ENCODE measurements at regions of chr3 and their contacts with region 1.

Region 1: DNA sequence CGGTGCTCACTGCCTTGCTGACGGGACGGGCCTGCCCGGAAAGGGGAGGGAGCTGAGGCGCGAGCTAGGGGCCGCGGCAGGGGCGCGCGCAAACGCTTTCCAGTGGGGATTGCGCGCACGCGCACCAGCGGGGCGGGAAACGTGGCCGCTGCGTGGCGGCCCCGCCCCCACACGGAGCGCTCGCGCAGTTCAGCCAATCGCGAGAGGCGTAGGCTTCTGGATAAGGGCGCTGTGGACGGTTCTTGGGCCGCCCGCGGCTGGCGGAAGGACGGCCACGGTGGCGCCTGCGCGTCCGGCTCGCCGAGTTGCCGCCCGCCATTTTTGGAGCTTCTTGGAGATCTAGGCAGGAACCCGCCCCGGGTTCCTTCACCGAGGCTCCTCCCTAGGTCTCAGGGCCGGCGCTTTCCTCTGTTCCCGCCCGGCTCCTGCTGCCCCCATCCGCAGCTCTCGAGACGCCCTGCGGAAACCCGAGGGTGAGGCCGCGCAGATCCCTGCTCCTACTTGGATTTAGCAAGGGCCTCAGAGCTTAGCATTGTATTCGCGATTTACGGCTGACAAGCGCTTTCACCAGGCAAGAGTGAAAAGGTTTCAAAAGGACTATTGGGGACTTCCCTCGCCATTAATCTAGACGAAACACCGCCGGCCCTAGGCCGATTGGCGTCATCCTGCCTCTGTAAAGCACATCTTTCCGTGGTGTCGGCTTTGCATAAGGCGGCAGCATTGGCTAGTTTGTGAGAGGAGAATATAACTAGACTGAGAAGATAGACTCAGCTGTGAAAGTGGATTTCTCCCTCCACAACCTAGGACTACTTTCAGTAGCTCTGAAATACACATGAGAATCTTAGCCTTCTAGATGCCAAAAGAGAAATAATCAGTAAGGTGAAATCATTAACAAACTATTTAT is 496 bp upstream of the STAG1 start:
- DNase-seq: peak; percentile 99 to 100
- ATAC-seq: peak; percentile 98
- H3K4me3 ChIP-seq: peak overlapping the region; percentile 35 to 71
- H3K27ac ChIP-seq: peak overlapping the region; percentile 96 to 99
- H3K4me1 ChIP-seq: peaks cover 0 to 5% of the 10 kb centered on the region in 2 donors
- H3K27me3 ChIP-seq: no peaks in the 10 kb centered on the region

Region 2: DNA sequence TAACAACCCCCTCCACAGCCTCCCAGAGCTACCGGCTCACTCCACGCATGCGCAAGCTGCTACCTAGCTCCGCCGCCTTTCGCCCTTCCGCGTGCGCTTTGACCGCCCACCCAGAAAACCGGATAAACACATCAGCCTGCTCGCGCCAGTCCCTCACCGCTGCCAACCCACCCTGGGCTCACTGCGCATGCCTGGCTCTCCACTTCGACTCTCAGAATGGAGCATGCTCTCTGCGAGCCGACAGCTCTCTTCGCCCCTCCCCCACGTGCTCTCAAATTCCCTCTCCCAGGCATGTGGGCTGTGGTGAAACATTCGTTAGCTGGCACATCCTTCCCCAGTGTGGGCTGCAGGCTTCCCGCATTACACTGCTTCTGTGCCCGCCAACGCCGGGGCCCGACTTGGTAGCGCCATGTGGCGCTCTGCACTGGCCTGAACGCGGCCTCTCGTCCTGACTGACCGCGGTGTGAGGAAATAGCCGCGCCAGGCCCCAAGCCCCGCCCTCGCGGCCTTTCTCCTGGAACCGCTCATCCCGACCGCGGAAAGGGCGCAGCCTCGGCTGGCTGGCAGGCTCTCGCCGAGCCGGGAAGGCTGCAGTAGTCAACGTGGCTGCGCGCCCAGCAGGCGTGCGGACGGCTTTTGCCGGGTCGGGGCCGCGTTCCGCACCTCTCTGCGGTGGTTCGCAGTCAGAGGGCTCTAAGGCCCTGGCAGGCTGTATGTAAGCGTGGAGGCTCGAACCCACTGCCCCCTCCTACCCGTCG is 556.1 kb before region 1 on chr3:
- intact Hi-C with region 1: loop called in 1 of 2 experiments (anchors 5 kb)
- DNase-seq: peak; percentile 100
- ATAC-seq: peak; percentile 96
- H3K4me3 ChIP-seq: peak overlapping the region; percentile 55 to 88
- H3K27ac ChIP-seq: peak overlapping the region; percentile 83 to 94
- H3K4me1 ChIP-seq: peaks cover 2 to 7% of the 10 kb centered on the region in 2 donors
- H3K27me3 ChIP-seq: no peaks in the 10 kb centered on the region

Region 3: GRCh38 chr3:136305878-136306277 is 446.8 kb before region 1 on chr3:
- intact Hi-C with region 1: loop called in 1 of 2 experiments (anchors 5 kb)
- DNase-seq: no peak
- ATAC-seq: no peak
- H3K4me3 ChIP-seq: no peak overlapping the region
- H3K27ac ChIP-seq: no peak overlapping the region
- H3K4me1 ChIP-seq: no peaks in the 10 kb centered on the region
- H3K27me3 ChIP-seq: no peaks in the 10 kb centered on the region

Region 4: GRCh38 chr3:136545664-136546268 is 206.9 kb before region 1 on chr3:
- intact Hi-C with region 1: loop called (anchors 10 kb)
- DNase-seq: no peak
- ATAC-seq: no peak
- H3K4me3 ChIP-seq: no peak overlapping the region
- H3K27ac ChIP-seq: no peak overlapping the region
- H3K4me1 ChIP-seq: peaks cover 1 to 2% of the 10 kb centered on the region in 2 donors
- H3K27me3 ChIP-seq: no peaks in the 10 kb centered on the region

Region 5: DNA sequence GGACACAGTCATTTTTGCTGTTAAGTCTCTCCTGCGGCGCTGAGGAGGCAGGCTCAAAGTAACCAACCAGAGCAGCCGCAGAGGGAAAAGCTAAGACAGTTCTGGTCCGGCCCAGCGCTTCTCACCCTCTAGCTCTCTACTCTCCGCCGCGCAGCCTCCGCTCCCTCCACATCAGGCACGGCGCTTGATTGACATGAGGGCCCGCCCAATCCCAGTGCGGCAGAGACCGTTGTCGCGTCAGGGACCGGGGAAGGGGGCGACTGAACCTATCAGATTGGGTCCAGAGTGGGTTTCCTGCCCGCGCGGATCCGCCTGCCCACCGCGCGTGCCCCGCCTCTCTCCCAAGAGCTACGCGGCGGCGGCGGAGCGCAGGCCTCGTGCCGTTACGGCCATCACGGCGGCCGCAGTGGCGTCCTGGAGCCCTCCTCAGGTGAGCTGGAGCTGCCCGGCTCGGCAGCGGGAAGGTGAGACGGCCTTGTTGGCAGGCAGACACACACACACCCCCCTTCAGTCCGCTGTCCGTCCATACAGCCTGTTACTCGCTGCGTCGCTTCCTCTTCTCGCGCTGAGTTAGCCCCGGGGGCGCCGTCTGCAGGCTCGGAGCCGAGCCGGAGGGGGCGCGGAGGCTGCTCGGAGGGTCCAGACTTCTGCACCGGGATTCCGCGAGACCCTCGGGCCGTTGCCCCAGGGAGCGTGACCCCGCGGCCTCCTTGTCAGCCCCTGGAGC is 109.4 kb after region 1 on chr3 and contains the start of gene NCK1:
- intact Hi-C with region 1: loop called (anchors 5 to 10 kb)
- DNase-seq: peak; percentile 99 to 100
- ATAC-seq: peak; percentile 99
- H3K4me3 ChIP-seq: peak within 1 kb of the TSS; percentile 67 to 69
- H3K27ac ChIP-seq: peak within 1 kb of the TSS in 1 of 2 donors; percentile 37
- H3K4me1 ChIP-seq: no peaks in the 10 kb centered on the region
- H3K27me3 ChIP-seq: no peaks in the 10 kb centered on the region
- total RNA-seq, gene NCK1: 36.7 to 51.9 TPM

Region 6: GRCh38 chr3:137013955-137014688 is 261.4 kb after region 1 on chr3:
- intact Hi-C with region 1: loop called (anchors 2 to 5 kb)
- DNase-seq: peak; percentile 92 to 96
- ATAC-seq: peak; percentile 98
- H3K4me3 ChIP-seq: peak overlapping the region; percentile 60 to 76
- H3K27ac ChIP-seq: peak overlapping the region; percentile 49 to 92
- H3K4me1 ChIP-seq: no peaks in the 10 kb centered on the region
- H3K27me3 ChIP-seq: no peaks in the 10 kb centered on the region

Measured in aorta (tissue), 5 donors.